ENCODE measurements at regions of chr12 and their contacts with region 1.

Region 1: GRCh38 chr12:8108808-8109398 is 14.5 kb upstream of the CLEC4A start:
- DNase-seq: peak; percentile 92
- H3K4me3 Mint-ChIP-seq: no peak overlapping the region
- H3K27ac Mint-ChIP-seq: no peak overlapping the region
- H3K4me1 Mint-ChIP-seq: no peaks in the 10 kb centered on the region
- H3K27me3 Mint-ChIP-seq: no peaks in the 10 kb centered on the region

Region 2: DNA sequence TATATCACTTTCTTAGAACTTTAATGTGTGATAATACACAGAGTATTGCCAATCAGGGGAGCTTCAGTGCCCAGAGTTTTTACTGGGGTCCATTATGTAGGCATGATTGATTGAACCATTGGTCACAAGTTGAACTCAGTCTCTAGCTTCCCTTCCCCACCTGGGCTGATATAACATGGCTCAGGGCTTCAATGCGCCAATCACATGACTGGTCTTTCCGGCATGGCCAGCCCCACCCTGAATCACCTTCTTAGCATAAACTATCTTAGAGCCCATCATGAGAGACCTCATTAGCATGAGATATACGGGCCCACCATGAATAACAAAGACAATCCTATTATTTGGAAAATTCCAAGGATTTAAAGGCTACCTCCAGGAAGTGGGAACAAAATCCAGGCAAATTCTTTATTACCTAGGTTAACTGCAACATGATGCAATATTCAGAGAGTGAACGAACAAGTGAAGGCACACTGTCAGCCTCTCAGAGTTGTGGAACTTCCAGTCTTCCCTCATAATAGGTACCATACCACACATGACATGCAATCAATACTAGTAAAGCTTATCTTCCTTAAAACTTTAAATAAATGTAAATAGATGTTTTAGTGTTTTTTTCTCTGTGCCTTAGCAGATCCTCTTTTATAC is 11.3 kb after region 1 on chr12:
- CTCF ChIA-PET with region 1: interaction called, 17 read pairs
- intact Hi-C with region 1: no loop called
- DNase-seq: no peak
- H3K4me3 Mint-ChIP-seq: no peak overlapping the region
- H3K27ac Mint-ChIP-seq: no peak overlapping the region
- H3K4me1 Mint-ChIP-seq: no peaks in the 10 kb centered on the region
- H3K27me3 Mint-ChIP-seq: no peaks in the 10 kb centered on the region

Region 3: DNA sequence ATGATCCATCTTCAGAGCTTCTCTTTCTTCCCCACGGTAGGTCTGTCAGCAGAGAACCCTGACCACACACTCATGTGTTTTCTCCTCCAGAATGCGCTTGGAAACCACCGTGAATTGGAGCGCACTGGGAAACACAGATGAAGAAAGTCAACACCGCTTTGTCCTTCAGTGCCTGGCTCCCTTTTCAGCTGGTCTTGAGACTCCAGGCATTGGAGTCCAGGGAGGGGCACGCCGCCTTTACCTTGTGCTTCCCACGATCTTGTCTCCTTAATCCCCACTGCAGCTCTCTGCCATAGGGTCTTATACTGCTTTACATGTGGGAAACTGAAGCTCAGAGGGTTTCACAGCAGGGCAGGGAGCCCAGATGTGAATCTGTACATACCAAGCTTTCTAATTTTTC is 117.5 kb after region 1 on chr12:
- CTCF ChIA-PET with region 1: interaction called, 37 read pairs
- intact Hi-C with region 1: loop called (anchors 1 kb)
- DNase-seq: no peak
- H3K4me3 Mint-ChIP-seq: no peak overlapping the region
- H3K27ac Mint-ChIP-seq: no peak overlapping the region
- H3K4me1 Mint-ChIP-seq: peaks cover 3% of the 10 kb centered on the region
- H3K27me3 Mint-ChIP-seq: no peaks in the 10 kb centered on the region